Activated T-helper 1 cell treated with anti-CD3 and anti-CD28 coated beads, Interleukin-12 subunit alpha, Interleukin-12 subunit beta, Interleukin-2, Interleukin-4 antibody, amounts not matched to agents 30 ng/mL and 10 ng/mL and 1 ng/mL, durations not matched to agents 14 hours and 24 hours and 36 hours (primary cell): ENCODE measurements at regions of chr1 and their contacts with region 1.

Region 1: GRCh38 chr1:117077267-117077666 is 17.1 kb downstream of the TTF2 start:
- DNase-seq: no peak
- H3K4me3 Mint-ChIP-seq: no peak overlapping the region
- H3K27ac Mint-ChIP-seq: peak overlapping the region; percentile 75
- H3K4me1 Mint-ChIP-seq: peaks cover 22% of the 10 kb centered on the region
- H3K27me3 Mint-ChIP-seq: no peaks in the 10 kb centered on the region

Region 2: GRCh38 chr1:117093870-117094621 is 16.8 kb after region 1 on chr1:
- intact Hi-C with region 1: loop called (anchors 1 kb)
- DNase-seq: peak; percentile 34
- H3K4me3 Mint-ChIP-seq: no peak overlapping the region
- H3K27ac Mint-ChIP-seq: peak overlapping the region; percentile 58
- H3K4me1 Mint-ChIP-seq: peaks cover 23% of the 10 kb centered on the region
- H3K27me3 Mint-ChIP-seq: no peaks in the 10 kb centered on the region